Activated B cell treated with CpG ODN at 0.5 μM for 24 hours (primary cell): ENCODE measurements at regions of chr5 and their contacts with region 1.

Region 1: DNA sequence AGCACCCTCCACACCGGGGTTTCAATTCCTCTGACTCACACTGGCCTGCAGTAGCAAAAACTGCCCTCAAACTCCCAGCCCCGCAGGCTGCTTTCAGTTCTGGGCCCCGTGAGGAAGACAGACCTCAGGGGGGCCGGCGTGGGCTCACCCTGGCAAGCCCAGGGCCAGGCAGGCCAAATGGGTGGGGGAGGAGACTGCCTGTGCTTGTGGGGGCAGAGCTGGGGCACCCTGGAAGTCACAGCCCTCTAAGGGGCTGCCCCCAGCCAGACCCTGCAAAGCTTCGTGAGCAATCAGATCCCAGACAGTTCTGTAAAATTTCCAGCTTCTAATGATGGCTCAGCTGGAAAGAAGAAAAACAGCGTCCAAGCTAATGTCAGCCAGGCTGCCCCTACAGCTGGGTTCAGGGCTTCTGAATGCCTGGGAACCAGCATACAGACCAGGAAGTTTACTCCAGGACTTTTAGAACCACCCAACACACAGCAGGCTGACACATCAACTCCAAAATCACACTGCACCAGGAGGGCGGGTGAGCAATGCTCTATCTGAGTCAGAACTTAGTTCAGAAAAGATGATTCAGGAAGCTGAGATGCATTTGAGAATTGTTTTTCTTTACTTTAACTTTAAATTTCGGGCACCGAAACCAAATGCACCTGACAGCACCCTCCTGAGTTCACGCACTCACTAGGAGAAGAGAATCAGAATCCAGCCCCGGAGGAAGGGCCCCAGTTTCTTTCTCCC is 34.6 kb downstream of the LPCAT1 start:
- DNase-seq: peak; percentile 62
- ATAC-seq: peak; percentile 51
- H3K4me3 Mint-ChIP-seq: peak overlapping the region; percentile 78
- H3K27ac Mint-ChIP-seq: peak overlapping the region; percentile 83
- H3K4me1 Mint-ChIP-seq: peaks cover 100% of the 10 kb centered on the region
- H3K27me3 Mint-ChIP-seq: no peaks in the 10 kb centered on the region
- CTCF ChIP-seq: no peak

Region 2: GRCh38 chr5:1633605-1634336 is 144.7 kb after region 1 on chr5:
- CTCF ChIA-PET with region 1: no interaction called
- POLR2A ChIA-PET with region 1: interaction called, 15 read pairs
- intact Hi-C with region 1: no loop called
- DNase-seq: peak; percentile 81
- ATAC-seq: peak; percentile 94
- H3K4me3 Mint-ChIP-seq: peak overlapping the region; percentile 93
- H3K27ac Mint-ChIP-seq: peak overlapping the region; percentile 93
- H3K4me1 Mint-ChIP-seq: peaks cover 21% of the 10 kb centered on the region
- H3K27me3 Mint-ChIP-seq: no peaks in the 10 kb centered on the region
- CTCF ChIP-seq: no peak

Region 3: GRCh38 chr5:2169850-2170760 is 681.0 kb after region 1 on chr5:
- CTCF ChIA-PET with region 1: no interaction called
- POLR2A ChIA-PET with region 1: no interaction called
- intact Hi-C with region 1: no loop called
- DNase-seq: no peak
- ATAC-seq: no peak
- H3K4me3 Mint-ChIP-seq: no peak overlapping the region
- H3K27ac Mint-ChIP-seq: no peak overlapping the region
- H3K4me1 Mint-ChIP-seq: no peaks in the 10 kb centered on the region
- H3K27me3 Mint-ChIP-seq: no peaks in the 10 kb centered on the region
- CTCF ChIP-seq: no peak